ENCODE measurements at regions of chr2 and their contacts with region 1.

Region 1: DNA sequence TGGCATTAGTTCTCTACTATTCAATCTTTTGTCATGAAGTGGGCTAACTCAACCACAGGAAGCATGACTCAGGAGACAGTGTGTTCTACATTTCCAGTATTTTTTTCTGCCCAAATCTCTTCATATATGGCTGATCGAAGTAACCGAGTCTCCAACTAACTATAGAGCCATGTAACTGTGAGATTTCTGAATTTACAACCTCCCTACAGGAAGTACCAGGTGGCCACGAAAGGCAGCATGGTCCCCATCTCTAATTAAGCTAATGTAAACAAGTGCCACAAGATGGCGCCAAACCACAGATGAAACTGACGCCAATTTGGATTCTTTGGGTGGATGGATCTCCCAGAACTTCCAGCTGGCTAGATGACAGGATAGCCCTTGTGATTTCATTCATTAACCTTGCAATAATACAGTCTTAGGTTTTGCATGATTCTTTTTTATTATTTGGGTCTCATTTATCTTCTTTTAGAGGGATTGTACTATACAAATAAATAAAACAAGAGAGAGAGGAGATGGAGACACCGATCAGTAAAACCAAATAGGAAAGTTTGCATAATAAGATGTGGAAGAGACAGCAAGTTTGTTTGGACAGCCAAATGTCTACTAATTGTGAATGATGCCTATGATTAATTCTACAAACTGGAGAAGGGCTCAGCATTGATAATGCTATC is 18.3 kb upstream of the ARHGAP15 start:
- DNase-seq: peak in 39 of 42 donors; percentile 16 to 86 (median 55)

Region 2: DNA sequence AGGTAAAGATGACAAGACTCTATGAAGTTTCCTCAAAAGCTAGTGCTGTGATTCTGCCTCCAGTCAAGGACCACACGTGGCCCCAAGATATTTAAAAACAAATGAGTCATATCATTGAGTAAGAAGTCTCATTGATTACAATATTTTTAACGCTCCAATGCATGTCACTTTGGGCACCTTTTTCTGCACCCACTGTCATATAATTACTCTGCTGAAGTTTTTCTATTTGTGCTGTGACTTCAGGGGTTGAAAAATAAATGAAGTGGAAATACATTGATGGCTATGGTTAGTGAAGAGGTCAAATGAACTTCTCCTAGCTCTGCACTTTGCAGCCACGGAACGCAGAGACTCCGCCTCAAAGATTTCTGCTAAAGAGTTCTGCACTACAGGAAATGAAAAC is 577.7 kb before region 1 on chr2:
- intact Hi-C with region 1: no loop called
- DNase-seq: no peak

Region 3: GRCh38 chr2:143259368-143259958 is 148.6 kb after region 1 on chr2:
- intact Hi-C with region 1: loop called (anchors 10 kb)
- DNase-seq: peak in 41 of 42 donors; percentile 15 to 87 (median 67)

Region 4: GRCh38 chr2:143282684-143283083 is 171.8 kb after region 1 on chr2:
- intact Hi-C with region 1: no loop called
- DNase-seq: peak in 1 of 42 donors; percentile 16

Measured in head of caudate nucleus (tissue), 42 donors.